Naive thymus-derived CD4-positive, alpha-beta T cell (primary cell): ENCODE measurements at regions of chr5 and their contacts with region 1.

Region 1: DNA sequence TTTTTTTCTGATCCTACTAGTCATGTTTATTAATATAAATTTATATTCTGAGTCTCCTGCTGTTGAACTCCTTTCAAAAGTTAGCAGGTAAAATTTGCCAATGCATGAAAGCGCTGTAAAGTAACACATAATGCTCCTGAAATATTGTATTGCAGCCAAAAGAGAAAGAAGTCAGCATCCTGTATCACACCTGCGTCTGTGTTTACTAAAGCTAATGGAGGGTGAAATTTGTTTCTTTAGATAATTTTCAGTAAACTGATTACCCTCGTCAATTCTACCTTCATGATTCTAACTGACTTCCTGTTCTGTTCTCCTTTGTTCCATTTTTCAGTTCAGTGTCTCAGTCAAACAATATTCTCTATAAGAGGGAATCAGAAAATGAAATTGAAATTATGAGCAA is 415.4 kb downstream of the CDH9 start:
- DNase-seq: no peak
- ATAC-seq: no peak
- H3K4me3 ChIP-seq: no peak overlapping the region
- H3K4me3 Mint-ChIP-seq: no peak overlapping the region
- H3K27ac ChIP-seq: no peak overlapping the region
- H3K27ac Mint-ChIP-seq: no peak overlapping the region
- H3K4me1 ChIP-seq: no peaks in the 10 kb centered on the region
- H3K4me1 Mint-ChIP-seq: no peaks in the 10 kb centered on the region
- H3K27me3 ChIP-seq: no peaks in the 10 kb centered on the region
- H3K27me3 Mint-ChIP-seq: no peaks in the 10 kb centered on the region

Region 2: GRCh38 chr5:26641492-26641891 is 18.5 kb after region 1 on chr5:
- CTCF ChIA-PET with region 1: no interaction called
- POLR2A ChIA-PET with region 1: no interaction called
- intact Hi-C with region 1: no loop called
- DNase-seq: no peak
- ATAC-seq: no peak
- H3K4me3 ChIP-seq: no peak overlapping the region
- H3K4me3 Mint-ChIP-seq: no peak overlapping the region
- H3K27ac ChIP-seq: no peak overlapping the region
- H3K27ac Mint-ChIP-seq: no peak overlapping the region
- H3K4me1 ChIP-seq: no peaks in the 10 kb centered on the region
- H3K4me1 Mint-ChIP-seq: no peaks in the 10 kb centered on the region
- H3K27me3 ChIP-seq: no peaks in the 10 kb centered on the region
- H3K27me3 Mint-ChIP-seq: no peaks in the 10 kb centered on the region

Region 3: GRCh38 chr5:26749829-26750228 is 126.9 kb after region 1 on chr5:
- CTCF ChIA-PET with region 1: no interaction called
- POLR2A ChIA-PET with region 1: no interaction called
- intact Hi-C with region 1: loop called in 1 of 2 experiments (anchors 5 kb)
- DNase-seq: no peak
- ATAC-seq: no peak
- H3K4me3 ChIP-seq: no peak overlapping the region
- H3K4me3 Mint-ChIP-seq: no peak overlapping the region
- H3K27ac ChIP-seq: no peak overlapping the region
- H3K27ac Mint-ChIP-seq: no peak overlapping the region
- H3K4me1 ChIP-seq: no peaks in the 10 kb centered on the region
- H3K4me1 Mint-ChIP-seq: no peaks in the 10 kb centered on the region
- H3K27me3 ChIP-seq: no peaks in the 10 kb centered on the region
- H3K27me3 Mint-ChIP-seq: no peaks in the 10 kb centered on the region